ENCODE measurements at regions of chr4 and their contacts with region 1.

Region 1: GRCh38 chr4:85531560-85532341 is 56.8 kb downstream of the ARHGAP24 start:
- DNase-seq: peak; percentile 38
- ATAC-seq: peak; percentile 49
- H3K4me3 ChIP-seq: no peak overlapping the region
- H3K4me3 Mint-ChIP-seq: peak overlapping the region; percentile 61
- H3K27ac ChIP-seq: peak overlapping the region; percentile 49 to 62
- H3K27ac Mint-ChIP-seq: peak overlapping the region; percentile 63
- H3K4me1 ChIP-seq: peaks cover 18 to 19% of the 10 kb centered on the region in 2 donors
- H3K4me1 Mint-ChIP-seq: peaks cover 52% of the 10 kb centered on the region
- H3K27me3 ChIP-seq: no peaks in the 10 kb centered on the region
- H3K27me3 Mint-ChIP-seq: no peaks in the 10 kb centered on the region
- CTCF ChIP-seq: no peak

Region 2: DNA sequence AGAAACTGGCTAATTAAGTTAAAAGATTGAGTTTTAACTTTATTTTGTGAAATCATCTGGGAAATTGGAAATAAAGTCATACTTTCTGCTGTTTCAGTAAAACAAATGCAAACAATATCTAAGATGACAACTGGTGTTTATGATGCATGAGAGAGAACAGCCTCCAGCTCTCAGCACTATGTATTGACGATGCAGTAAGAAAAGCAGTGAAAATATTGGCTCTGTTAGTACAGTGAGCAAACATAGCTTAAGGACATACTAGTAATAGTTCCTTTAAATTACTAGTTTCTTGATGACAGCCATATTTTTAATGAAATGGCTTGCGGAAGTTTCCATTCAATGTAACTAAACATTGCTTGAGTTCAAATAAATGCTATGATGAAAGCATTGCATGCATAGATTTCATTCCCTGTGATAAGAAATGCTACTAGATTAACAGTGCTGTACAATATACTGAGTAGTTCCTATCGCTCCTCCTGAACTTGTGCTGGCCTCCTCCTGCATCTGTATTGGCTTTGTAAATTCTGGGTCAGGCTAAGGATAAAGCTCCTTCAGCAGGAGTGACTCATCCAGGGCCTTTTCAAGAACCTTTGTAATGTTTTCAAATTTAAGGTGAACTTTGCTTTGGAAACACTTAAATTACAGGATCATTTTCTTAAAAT is 45.2 kb before region 1 on chr4:
- CTCF ChIA-PET with region 1: no interaction called
- POLR2A ChIA-PET with region 1: no interaction called
- intact Hi-C with region 1: no loop called
- DNase-seq: no peak
- ATAC-seq: no peak
- H3K4me3 ChIP-seq: no peak overlapping the region
- H3K4me3 Mint-ChIP-seq: no peak overlapping the region
- H3K27ac ChIP-seq: peak overlapping the region in 1 of 2 donors; percentile 5
- H3K27ac Mint-ChIP-seq: peak overlapping the region; percentile 32
- H3K4me1 ChIP-seq: peaks cover 28 to 35% of the 10 kb centered on the region in 2 donors
- H3K4me1 Mint-ChIP-seq: peaks cover 53% of the 10 kb centered on the region
- H3K27me3 ChIP-seq: no peaks in the 10 kb centered on the region
- H3K27me3 Mint-ChIP-seq: no peaks in the 10 kb centered on the region
- CTCF ChIP-seq: no peak

Region 3: GRCh38 chr4:85498068-85498733 is 33.5 kb before region 1 on chr4:
- CTCF ChIA-PET with region 1: no interaction called
- POLR2A ChIA-PET with region 1: no interaction called
- intact Hi-C with region 1: loop called (anchors 5 kb)
- DNase-seq: peak; percentile 82
- ATAC-seq: peak; percentile 97
- H3K4me3 ChIP-seq: peak overlapping the region in 1 of 5 experiments; percentile 34
- H3K4me3 Mint-ChIP-seq: peak overlapping the region; percentile 66
- H3K27ac ChIP-seq: peak overlapping the region; percentile 67 to 91
- H3K27ac Mint-ChIP-seq: peak overlapping the region; percentile 89
- H3K4me1 ChIP-seq: peaks cover 36 to 45% of the 10 kb centered on the region in 2 donors
- H3K4me1 Mint-ChIP-seq: peaks cover 63% of the 10 kb centered on the region
- H3K27me3 ChIP-seq: no peaks in the 10 kb centered on the region
- H3K27me3 Mint-ChIP-seq: no peaks in the 10 kb centered on the region
- CTCF ChIP-seq: no peak

Region 4: GRCh38 chr4:85514117-85514516 is 17.6 kb before region 1 on chr4:
- CTCF ChIA-PET with region 1: interaction called, 6 read pairs
- POLR2A ChIA-PET with region 1: interaction called, 6 read pairs
- intact Hi-C with region 1: loop called (anchors 2 kb)
- DNase-seq: no peak
- ATAC-seq: no peak
- H3K4me3 ChIP-seq: peak overlapping the region in 1 of 5 experiments; percentile 26
- H3K4me3 Mint-ChIP-seq: peak overlapping the region; percentile 56
- H3K27ac ChIP-seq: no peak overlapping the region
- H3K27ac Mint-ChIP-seq: peak overlapping the region; percentile 39
- H3K4me1 ChIP-seq: peaks cover 24 to 31% of the 10 kb centered on the region in 2 donors
- H3K4me1 Mint-ChIP-seq: peaks cover 35% of the 10 kb centered on the region
- H3K27me3 ChIP-seq: no peaks in the 10 kb centered on the region
- H3K27me3 Mint-ChIP-seq: no peaks in the 10 kb centered on the region
- CTCF ChIP-seq: no peak

Region 5: GRCh38 chr4:85569730-85570299 is 38.1 kb after region 1 on chr4:
- CTCF ChIA-PET with region 1: no interaction called
- POLR2A ChIA-PET with region 1: no interaction called
- intact Hi-C with region 1: loop called (anchors 5 kb)
- DNase-seq: no peak
- ATAC-seq: no peak
- H3K4me3 ChIP-seq: no peak overlapping the region
- H3K4me3 Mint-ChIP-seq: no peak overlapping the region
- H3K27ac ChIP-seq: peak overlapping the region; percentile 12 to 73
- H3K27ac Mint-ChIP-seq: peak overlapping the region; percentile 39
- H3K4me1 ChIP-seq: peaks cover 46 to 62% of the 10 kb centered on the region in 2 donors
- H3K4me1 Mint-ChIP-seq: peaks cover 30% of the 10 kb centered on the region
- H3K27me3 ChIP-seq: no peaks in the 10 kb centered on the region
- H3K27me3 Mint-ChIP-seq: no peaks in the 10 kb centered on the region
- CTCF ChIP-seq: no peak

Region 6: DNA sequence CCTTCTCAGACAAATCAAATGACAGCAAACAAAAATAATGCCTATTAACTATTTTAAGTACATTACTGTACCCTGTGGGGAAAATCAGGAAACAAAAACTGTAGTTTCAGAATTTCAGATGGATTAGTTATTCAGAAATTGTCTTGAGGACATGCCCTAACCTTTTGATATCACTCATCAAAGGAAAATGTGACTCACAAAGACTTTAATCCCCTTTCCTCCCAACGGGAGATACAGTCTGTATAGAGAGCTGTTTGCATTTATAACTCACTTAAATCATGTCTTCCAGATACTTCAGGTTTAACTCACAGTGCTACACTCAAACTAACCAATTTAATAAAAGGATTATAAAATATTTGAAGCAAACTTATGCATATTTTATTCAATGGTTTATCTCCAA is 524.1 kb after region 1 on chr4:
- CTCF ChIA-PET with region 1: no interaction called
- POLR2A ChIA-PET with region 1: no interaction called
- intact Hi-C with region 1: no loop called
- DNase-seq: no peak
- ATAC-seq: no peak
- H3K4me3 ChIP-seq: no peak overlapping the region
- H3K4me3 Mint-ChIP-seq: no peak overlapping the region
- H3K27ac ChIP-seq: no peak overlapping the region
- H3K27ac Mint-ChIP-seq: no peak overlapping the region
- H3K4me1 ChIP-seq: no peaks in the 10 kb centered on the region
- H3K4me1 Mint-ChIP-seq: no peaks in the 10 kb centered on the region
- H3K27me3 ChIP-seq: no peaks in the 10 kb centered on the region
- H3K27me3 Mint-ChIP-seq: peaks cover 11% of the 10 kb centered on the region
- CTCF ChIP-seq: no peak

Region 7: GRCh38 chr4:86160426-86160825 is 628.7 kb after region 1 on chr4:
- CTCF ChIA-PET with region 1: no interaction called
- POLR2A ChIA-PET with region 1: no interaction called
- intact Hi-C with region 1: no loop called
- DNase-seq: no peak
- ATAC-seq: no peak
- H3K4me3 ChIP-seq: no peak overlapping the region
- H3K4me3 Mint-ChIP-seq: no peak overlapping the region
- H3K27ac ChIP-seq: no peak overlapping the region
- H3K27ac Mint-ChIP-seq: no peak overlapping the region
- H3K4me1 ChIP-seq: no peaks in the 10 kb centered on the region
- H3K4me1 Mint-ChIP-seq: no peaks in the 10 kb centered on the region
- H3K27me3 ChIP-seq: peaks cover 0 to 5% (median 0%) of the 10 kb centered on the region in 4 experiments
- H3K27me3 Mint-ChIP-seq: no peaks in the 10 kb centered on the region
- CTCF ChIP-seq: no peak

Measured in B cell (primary cell).